ENCODE measurements at regions of chr6 and their contacts with region 1.

Region 1: GRCh38 chr6:152982768-152983636 is at the start of gene FBXO5:
- DNase-seq: peak; percentile 96
- ATAC-seq: peak; percentile 93
- H3K4me3 ChIP-seq: peak within 1 kb of the TSS; percentile 74 to 100 (median 97)
- H3K27ac ChIP-seq: peak within 1 kb of the TSS; percentile 92
- H3K4me1 ChIP-seq: peaks cover 55% of the 10 kb centered on the region
- H3K27me3 ChIP-seq: no peaks in the 10 kb centered on the region; a peak in 1 of 5 replicates
- CTCF ChIP-seq: no peak
- EP300 ChIP-seq: 0 out of 4 replicates have a peak, but pooled peaks of 1 of the 2 experiments have one; percentile 36
- POLR2A ChIP-seq: peak; percentile 80 to 87
- RAD21 ChIP-seq: peak; percentile 11; the same call in 1 of the 2 replicates
- total RNA-seq, gene FBXO5: 41.5 and 53.4 TPM in 2 replicates

Region 2: DNA sequence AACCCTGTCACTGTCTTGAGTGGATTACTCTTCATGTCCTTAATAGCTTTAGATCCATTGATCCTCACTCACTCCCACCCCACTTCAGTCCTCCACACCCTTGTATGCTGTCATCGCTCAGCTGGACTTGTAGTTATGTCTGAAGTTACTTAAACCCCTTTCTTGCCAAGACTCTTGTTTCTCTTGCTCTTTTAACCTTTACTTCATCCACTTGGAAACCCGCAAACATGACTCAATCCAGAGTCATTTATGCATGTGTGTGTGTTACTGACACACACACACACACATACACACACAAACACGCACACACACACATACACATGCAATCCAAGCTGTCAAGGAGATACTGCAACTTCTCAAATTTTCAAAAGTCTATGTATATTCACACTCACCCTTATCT is 687.7 kb before region 1 on chr6:
- CTCF ChIA-PET with region 1: no interaction called
- POLR2A ChIA-PET with region 1: interaction called, 3 read pairs
- in situ Hi-C with region 1: loop called (anchors 25 kb)
- intact Hi-C with region 1: no loop called
- DNase-seq: no peak
- ATAC-seq: no peak
- H3K4me3 ChIP-seq: no peak overlapping the region
- H3K27ac ChIP-seq: no peak overlapping the region
- H3K4me1 ChIP-seq: peaks cover 25% of the 10 kb centered on the region
- H3K27me3 ChIP-seq: no peaks in the 10 kb centered on the region
- CTCF ChIP-seq: no peak
- EP300 ChIP-seq: no peak
- POLR2A ChIP-seq: no peak
- RAD21 ChIP-seq: no peak

Region 3: DNA sequence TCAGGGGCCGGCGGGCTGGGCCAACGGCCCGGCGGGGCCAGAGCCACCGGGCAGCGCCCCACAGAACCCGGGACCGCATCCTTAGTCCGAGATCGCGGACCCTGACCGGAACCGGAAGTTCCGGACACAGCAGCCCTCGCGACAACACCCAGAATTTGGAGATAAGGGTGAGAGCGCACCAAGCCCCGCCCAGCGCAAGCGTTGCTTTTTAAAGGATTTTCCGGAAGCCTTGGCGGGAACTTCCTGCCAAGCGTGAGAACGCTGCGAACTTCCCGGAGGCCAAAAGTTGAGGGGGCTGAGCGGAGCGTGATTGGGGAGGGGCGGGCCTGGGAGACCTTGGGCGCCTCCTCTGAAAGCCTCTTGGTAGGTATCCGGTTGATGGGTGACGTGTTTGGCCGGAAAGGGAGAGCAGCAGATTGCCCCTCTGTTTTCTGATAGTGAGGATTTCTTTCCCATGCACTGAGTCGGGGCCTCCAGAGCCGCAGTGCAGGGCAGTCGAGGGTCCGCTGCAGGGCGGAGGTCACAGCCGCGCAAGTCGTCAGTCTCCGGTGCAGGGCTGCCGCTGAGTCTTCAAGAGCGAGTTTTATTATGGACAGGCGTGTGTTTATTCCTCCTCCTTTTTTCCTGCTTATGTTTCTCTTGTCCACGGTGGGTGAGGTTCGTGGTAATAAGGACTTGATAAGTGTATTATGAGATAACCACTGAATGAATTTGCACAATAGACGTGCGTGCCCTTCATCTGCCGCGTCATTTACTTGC is 19.8 kb after region 1 on chr6 and contains the start of gene MTRF1L:
- CTCF ChIA-PET with region 1: no interaction called
- POLR2A ChIA-PET with region 1: interaction called, 28 read pairs
- in situ Hi-C with region 1: no loop called
- intact Hi-C with region 1: loop called (anchors 1 kb)
- DNase-seq: peak; percentile 99
- ATAC-seq: peak; percentile 97
- H3K4me3 ChIP-seq: peak within 1 kb of the TSS; percentile 69 to 93 (median 92)
- H3K27ac ChIP-seq: peak within 1 kb of the TSS; percentile 88
- H3K4me1 ChIP-seq: peaks cover 33% of the 10 kb centered on the region
- H3K27me3 ChIP-seq: no peaks in the 10 kb centered on the region; a peak in 2 of 5 replicates
- CTCF ChIP-seq: 0 out of 2 replicates have a peak, but pooled peaks have one; percentile 10
- EP300 ChIP-seq: no peak
- POLR2A ChIP-seq: peak; percentile 53 to 70; a peak in 3 of 4 replicates
- RAD21 ChIP-seq: 0 out of 2 replicates have a peak, but pooled peaks have one; percentile 25
- total RNA-seq, gene MTRF1L: 28.7 and 32.4 TPM in 2 replicates

Region 4: DNA sequence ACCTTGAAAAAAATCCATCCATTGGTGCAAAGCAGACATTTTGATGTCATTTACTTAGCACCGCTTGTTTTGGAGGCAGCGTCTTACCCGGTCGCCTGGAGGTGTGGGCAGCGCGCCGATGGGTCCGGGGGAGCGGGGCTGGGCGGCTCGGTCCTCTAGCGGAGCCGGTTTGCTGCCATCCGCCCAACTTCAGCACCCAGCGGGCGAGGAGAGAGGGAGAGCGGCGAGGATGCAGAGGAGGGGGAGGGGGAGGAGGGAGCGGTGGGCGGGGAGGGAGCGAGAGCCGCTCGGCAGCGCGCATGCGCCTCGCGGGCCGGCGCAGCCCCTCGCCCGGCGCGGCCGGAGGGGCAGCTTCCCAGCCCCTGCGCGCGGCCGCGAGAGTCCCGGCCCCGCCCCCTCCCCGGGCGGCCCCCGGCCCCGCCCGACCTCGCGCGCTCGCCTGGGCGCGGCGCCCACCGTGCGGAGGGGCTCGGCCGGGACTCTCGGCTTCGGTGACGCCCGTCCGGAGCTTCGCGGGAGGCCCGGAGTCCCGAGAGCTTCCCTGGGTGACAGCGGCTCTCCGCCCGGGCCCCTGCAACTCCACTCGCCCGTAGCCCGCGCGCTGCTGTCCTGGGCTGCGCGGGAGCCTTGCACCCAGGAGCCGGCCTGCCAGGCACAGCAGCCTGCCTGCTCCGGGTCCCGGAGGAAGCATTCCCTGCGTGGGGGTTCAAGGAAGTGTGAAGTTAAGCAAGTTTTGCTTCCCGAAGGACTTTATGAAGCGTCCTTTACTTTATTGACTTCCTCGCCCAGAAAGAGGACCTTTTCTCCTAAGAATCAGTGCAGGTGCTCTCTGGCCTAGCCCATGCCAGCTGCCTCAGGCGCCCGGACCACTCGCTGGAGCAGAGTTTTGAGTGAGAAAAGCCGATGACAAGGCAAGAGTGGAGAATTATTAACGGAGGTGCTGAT is 148.3 kb after region 1 on chr6 and contains the start of gene RGS17:
- CTCF ChIA-PET with region 1: no interaction called
- POLR2A ChIA-PET with region 1: no interaction called
- in situ Hi-C with region 1: no loop called
- intact Hi-C with region 1: no loop called
- DNase-seq: no peak
- ATAC-seq: peak; percentile 75
- H3K4me3 ChIP-seq: peak within 1 kb of the TSS; percentile 62 to 77 (median 67)
- H3K27ac ChIP-seq: no peak within 1 kb of the TSS
- H3K4me1 ChIP-seq: peaks cover 11% of the 10 kb centered on the region
- H3K27me3 ChIP-seq: peaks cover 6 to 57% of the 10 kb centered on the region in 2 experiments; a peak in 4 of 5 replicates
- CTCF ChIP-seq: no peak
- EP300 ChIP-seq: no peak
- POLR2A ChIP-seq: no peak
- RAD21 ChIP-seq: no peak
- total RNA-seq, gene RGS17: not detected in 2 replicates

Measured in HepG2 (cell line).